ENCODE measurements at regions of chr7 and their contacts with region 1.

Region 1: DNA sequence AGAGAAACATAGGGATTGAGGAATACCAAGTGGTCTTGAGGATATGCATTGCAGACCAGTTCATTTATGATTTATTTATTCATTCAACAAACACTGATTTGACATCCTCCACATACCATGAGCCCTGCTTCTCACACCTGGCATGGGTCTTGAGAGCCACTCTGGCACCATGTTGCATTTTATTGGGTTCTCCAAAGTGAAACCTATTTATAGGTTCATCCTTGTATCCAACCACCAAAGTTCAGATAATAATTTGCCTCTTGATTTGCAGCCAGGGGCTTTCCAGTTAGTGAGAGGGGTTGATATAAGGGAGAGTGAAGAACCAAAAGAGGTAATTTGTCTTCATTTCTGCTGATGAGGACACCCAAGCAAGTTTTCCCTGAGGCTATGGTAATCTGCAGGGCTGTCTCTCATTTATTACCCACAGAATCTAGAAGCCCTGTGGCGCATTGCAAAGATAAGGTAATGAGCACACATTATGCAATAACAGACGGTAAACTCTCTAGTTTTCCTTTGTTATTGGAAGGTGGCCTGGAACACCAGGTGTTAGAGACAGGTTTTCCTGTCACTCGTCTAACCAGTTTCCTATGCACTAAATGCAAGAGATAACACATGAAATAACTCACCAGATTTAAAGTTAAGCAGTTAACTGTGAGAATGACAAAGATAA is 28.8 kb upstream of the ICA1 start:
- DNase-seq: no peak
- ATAC-seq: peak in 2 of 8 donors; percentile 70 to 90
- H3K4me3 ChIP-seq: no peak overlapping the region
- H3K27ac ChIP-seq: peak overlapping the region in 2 of 10 donors; percentile 12 to 33
- H3K4me1 ChIP-seq: peaks cover 0 to 23% (median 0%) of the 10 kb centered on the region in 9 donors
- H3K27me3 ChIP-seq: no peaks in the 10 kb centered on the region
- CTCF ChIP-seq: no peak

Region 2: DNA sequence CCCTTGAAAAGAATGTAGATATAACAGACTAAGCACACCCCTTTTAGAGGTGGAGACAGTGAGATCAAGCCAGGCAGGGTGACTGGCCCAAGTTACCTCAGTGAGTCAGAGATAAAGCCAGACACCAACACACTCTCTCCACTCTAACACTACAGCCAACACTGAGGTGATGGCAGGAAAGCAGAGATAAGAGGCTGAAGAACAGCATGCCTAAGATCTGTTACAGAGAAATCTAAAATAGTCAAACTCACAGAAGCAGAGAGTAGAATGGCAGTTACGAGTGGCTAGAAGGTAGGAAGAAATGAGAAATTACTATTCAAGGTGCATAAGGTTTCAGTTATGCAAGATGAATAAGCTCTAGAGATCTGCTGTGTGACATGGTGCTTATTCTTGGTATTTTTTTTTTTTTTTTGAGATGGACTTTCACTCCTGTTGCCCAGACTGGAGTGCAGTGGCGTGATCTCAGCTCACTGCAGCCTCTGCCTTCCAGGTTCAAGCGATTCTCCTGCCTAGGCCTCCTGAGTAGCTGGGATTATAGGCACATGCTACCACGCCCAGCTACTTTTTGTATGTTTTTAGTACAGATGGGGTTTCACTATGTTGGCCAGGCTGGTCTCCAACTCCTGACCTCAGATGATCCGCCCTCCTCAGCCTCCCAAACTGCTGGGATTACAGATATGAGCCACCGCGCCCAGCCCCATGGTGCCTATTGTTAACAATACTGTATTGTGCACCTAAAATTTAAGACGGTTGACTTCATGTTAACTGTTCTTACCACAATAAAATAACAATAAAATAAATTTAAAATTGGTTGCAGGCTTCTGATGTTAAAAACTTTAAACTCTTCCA is 57.6 kb before region 1 on chr7:
- intact Hi-C with region 1: loop called in 4 of 10 experiments (anchors 5 kb)
- DNase-seq: peak in 1 of 2 donors; percentile 23
- ATAC-seq: peak; percentile 63 to 96 (median 91)
- H3K4me3 ChIP-seq: no peak overlapping the region
- H3K27ac ChIP-seq: peak overlapping the region in 6 of 10 donors; percentile 6 to 65 (median 46)
- H3K4me1 ChIP-seq: peaks cover 0 to 35% (median 7%) of the 10 kb centered on the region in 9 donors
- H3K27me3 ChIP-seq: no peaks in the 10 kb centered on the region
- CTCF ChIP-seq: no peak

Measured in heart right ventricle (tissue), 16 donors.